Heart right ventricle (tissue), 16 donors: ENCODE measurements at regions of chr11 and their contacts with region 1.

Region 1: GRCh38 chr11:7098235-7098832 is 9.5 kb downstream of the RBMXL2 start:
- DNase-seq: no peak
- ATAC-seq: peak in 4 of 8 donors; percentile 43 to 67 (median 55)
- H3K4me3 ChIP-seq: no peak overlapping the region
- H3K27ac ChIP-seq: no peak overlapping the region
- H3K4me1 ChIP-seq: no peaks in the 10 kb centered on the region
- H3K27me3 ChIP-seq: peaks cover 0 to 27% (median 10%) of the 10 kb centered on the region in 7 donors
- CTCF ChIP-seq: peak; percentile 27 to 76 (median 67)

Region 2: DNA sequence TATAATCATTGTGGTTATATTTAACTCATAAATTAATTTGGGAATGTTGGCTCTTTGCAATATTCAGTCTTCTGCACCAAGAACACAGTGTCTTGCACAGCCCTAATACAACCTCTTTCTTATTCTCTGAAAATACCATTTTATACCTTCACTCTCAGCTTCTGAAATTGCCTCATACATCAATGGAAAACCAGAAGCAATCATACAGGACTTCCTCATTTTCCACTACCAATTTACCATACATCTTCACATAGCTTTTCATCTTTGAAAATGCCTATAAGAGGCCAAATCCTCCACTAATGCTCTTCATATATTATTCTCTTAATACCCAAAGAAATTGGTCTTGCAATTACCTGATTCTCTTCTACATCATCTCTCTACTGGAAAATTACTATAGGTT is 319.8 kb before region 1 on chr11:
- intact Hi-C with region 1: no loop called
- DNase-seq: no peak
- ATAC-seq: no peak
- H3K4me3 ChIP-seq: no peak overlapping the region
- H3K27ac ChIP-seq: no peak overlapping the region
- H3K4me1 ChIP-seq: no peaks in the 10 kb centered on the region
- H3K27me3 ChIP-seq: peaks cover 0 to 5% (median 0%) of the 10 kb centered on the region in 7 donors
- CTCF ChIP-seq: no peak

Region 3: GRCh38 chr11:7436657-7437056 is 338.3 kb after region 1 on chr11:
- intact Hi-C with region 1: loop called in 5 of 10 experiments (anchors 5 kb)
- DNase-seq: no peak
- ATAC-seq: peak in 5 of 8 donors; percentile 35 to 74 (median 46)
- H3K4me3 ChIP-seq: no peak overlapping the region
- H3K27ac ChIP-seq: peak overlapping the region in 1 of 10 donors; percentile 23
- H3K4me1 ChIP-seq: peaks cover 0 to 27% (median 0%) of the 10 kb centered on the region in 9 donors
- H3K27me3 ChIP-seq: no peaks in the 10 kb centered on the region
- CTCF ChIP-seq: no peak

Region 4: DNA sequence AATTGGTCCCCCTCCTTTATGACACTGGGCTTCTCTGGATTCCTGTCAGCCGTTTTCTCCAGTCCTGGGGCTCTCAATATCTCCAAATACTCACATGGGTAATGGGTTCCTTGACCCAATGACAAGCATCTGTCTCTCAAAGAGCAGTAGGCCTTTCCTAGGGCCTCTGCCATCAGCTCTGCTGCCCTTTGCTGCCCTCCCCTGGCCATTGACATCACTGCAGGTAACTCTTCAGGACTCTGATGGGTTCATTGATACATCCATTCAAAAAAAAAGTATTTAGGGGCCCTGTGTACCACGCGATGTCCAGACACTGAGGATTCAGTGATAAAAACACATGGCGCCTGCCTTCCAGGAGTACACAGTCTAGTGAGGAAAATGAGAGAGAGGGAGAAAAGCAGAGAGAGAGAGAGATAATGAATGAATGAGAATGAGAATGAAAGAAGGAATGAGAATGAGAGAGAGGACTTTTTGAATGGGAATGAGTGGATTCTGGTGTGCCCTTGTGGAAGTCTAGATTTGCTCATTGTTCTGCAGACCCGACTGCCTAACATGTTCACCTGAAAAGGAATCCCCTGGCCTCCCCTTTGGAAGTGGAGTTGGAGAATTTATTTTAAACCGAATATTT is 344.4 kb after region 1 on chr11:
- intact Hi-C with region 1: loop called in 6 of 10 experiments (anchors 2 to 5 kb)
- DNase-seq: peak; percentile 67 to 70
- ATAC-seq: peak; percentile 63 to 84 (median 74)
- H3K4me3 ChIP-seq: no peak overlapping the region
- H3K27ac ChIP-seq: no peak overlapping the region
- H3K4me1 ChIP-seq: peaks cover 0 to 16% (median 0%) of the 10 kb centered on the region in 9 donors
- H3K27me3 ChIP-seq: no peaks in the 10 kb centered on the region
- CTCF ChIP-seq: peak; percentile 73 to 92 (median 87)

Region 5: DNA sequence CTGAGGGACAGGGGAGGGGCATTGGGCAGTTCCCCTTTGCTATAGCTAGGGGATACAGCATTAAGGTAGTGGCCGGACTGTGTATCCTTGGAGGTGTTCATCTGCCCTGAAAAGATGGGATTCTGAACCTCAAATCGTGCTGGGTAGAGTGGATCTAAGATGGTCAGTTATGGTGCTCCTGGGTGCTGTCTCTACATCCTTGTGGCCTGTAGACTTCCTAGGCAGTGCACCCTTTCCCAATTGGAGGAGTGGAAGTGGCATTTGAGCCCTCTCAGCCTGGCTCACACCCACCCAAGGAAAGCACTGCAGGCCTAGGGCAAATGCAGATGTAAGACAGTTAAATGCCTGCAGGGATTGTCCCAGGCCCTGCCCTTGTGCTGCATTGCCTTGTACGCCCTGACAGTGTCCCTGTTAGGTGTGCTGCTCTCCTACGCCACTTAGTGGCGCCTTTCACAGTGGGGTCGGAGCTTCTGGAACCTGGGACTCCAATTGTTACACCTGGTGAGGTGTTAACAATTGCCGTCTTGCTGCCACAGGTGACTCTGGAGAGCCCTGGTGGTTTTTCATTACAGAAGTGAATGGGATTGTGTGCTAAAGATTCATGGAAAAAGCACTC is 450.4 kb after region 1 on chr11:
- intact Hi-C with region 1: loop called in 1 of 10 experiments (anchors 10 kb)
- DNase-seq: no peak
- ATAC-seq: peak in 4 of 8 donors; percentile 44 to 67 (median 52)
- H3K4me3 ChIP-seq: no peak overlapping the region
- H3K27ac ChIP-seq: no peak overlapping the region
- H3K4me1 ChIP-seq: peaks cover 0 to 6% (median 1%) of the 10 kb centered on the region in 9 donors
- H3K27me3 ChIP-seq: no peaks in the 10 kb centered on the region
- CTCF ChIP-seq: peak in 3 of 9 donors; percentile 34 to 50 (median 35)

Region 6: GRCh38 chr11:7688238-7688826 is 590.0 kb after region 1 on chr11:
- intact Hi-C with region 1: loop called in 9 of 10 experiments (anchors 2 to 10 kb)
- DNase-seq: no peak
- ATAC-seq: no peak
- H3K4me3 ChIP-seq: no peak overlapping the region
- H3K27ac ChIP-seq: no peak overlapping the region
- H3K4me1 ChIP-seq: no peaks in the 10 kb centered on the region
- H3K27me3 ChIP-seq: peaks cover 0 to 24% (median 6%) of the 10 kb centered on the region in 7 donors
- CTCF ChIP-seq: peak; percentile 41 to 82 (median 75)

Region 7: GRCh38 chr11:7977232-7977917 is 879.0 kb after region 1 on chr11:
- intact Hi-C with region 1: loop called in 3 of 10 experiments (anchors 5 to 10 kb)
- DNase-seq: no peak
- ATAC-seq: no peak
- H3K4me3 ChIP-seq: no peak overlapping the region
- H3K27ac ChIP-seq: no peak overlapping the region
- H3K4me1 ChIP-seq: no peaks in the 10 kb centered on the region
- H3K27me3 ChIP-seq: peaks cover 0 to 4% (median 0%) of the 10 kb centered on the region in 7 donors
- CTCF ChIP-seq: no peak

Region 8: GRCh38 chr11:7986768-7987559 is 888.6 kb after region 1 on chr11 and contains the start of gene EIF3F:
- intact Hi-C with region 1: loop called in 6 of 10 experiments (anchors 2 to 10 kb)
- DNase-seq: peak; percentile 78 to 99
- ATAC-seq: peak; percentile 98 to 100 (median 100)
- H3K4me3 ChIP-seq: peak within 1 kb of the TSS; percentile 56 to 98 (median 78)
- H3K27ac ChIP-seq: peak within 1 kb of the TSS in 9 of 10 donors; percentile 66 to 86 (median 75)
- H3K4me1 ChIP-seq: peaks cover 7 to 41% (median 26%) of the 10 kb centered on the region in 9 donors
- H3K27me3 ChIP-seq: no peaks in the 10 kb centered on the region
- CTCF ChIP-seq: peak; percentile 74 to 97 (median 86)
- total RNA-seq, gene EIF3F: 142 to 176 (median 157) TPM